ENCODE measurements at regions of chr1 and their contacts with region 1.

Region 1: DNA sequence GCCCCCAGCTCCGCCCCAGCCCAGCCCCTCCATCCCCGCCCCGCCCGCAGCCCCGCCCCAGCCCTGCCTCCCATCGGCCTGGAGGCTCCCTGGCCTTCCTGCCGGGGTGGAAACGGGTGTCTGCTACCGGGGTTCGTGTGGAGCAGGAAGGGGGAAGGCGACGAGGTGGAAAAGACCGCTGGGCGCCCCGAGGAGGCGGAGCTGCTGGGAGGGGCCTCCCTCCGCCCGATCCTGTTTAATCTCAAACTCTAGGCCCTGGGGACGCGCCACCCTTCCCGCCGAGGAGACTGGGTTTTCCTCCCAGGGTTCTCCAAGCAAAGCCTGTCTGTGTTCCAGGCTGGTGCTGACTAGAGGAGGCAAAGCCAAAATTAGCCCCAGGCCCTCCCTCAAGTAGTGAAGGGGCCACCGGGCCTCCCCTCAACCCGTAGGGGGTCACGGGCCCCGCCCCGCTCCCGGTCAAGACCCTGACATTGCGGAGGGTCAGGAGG is 16.2 kb upstream of the TTLL10 start:
- DNase-seq: peak; percentile 93
- H3K4me3 ChIP-seq: peak overlapping the region; percentile 41 to 62 (median 60)
- H3K27ac ChIP-seq: peak overlapping the region; percentile 96 to 98 (median 97)
- H3K4me1 ChIP-seq: peaks cover 9 to 44% (median 41%) of the 10 kb centered on the region in 4 donors
- H3K27me3 ChIP-seq: no peaks in the 10 kb centered on the region
- CTCF ChIP-seq: no peak
- EP300 ChIP-seq: no peak
- POLR2A ChIP-seq: peak; percentile 92

Region 2: DNA sequence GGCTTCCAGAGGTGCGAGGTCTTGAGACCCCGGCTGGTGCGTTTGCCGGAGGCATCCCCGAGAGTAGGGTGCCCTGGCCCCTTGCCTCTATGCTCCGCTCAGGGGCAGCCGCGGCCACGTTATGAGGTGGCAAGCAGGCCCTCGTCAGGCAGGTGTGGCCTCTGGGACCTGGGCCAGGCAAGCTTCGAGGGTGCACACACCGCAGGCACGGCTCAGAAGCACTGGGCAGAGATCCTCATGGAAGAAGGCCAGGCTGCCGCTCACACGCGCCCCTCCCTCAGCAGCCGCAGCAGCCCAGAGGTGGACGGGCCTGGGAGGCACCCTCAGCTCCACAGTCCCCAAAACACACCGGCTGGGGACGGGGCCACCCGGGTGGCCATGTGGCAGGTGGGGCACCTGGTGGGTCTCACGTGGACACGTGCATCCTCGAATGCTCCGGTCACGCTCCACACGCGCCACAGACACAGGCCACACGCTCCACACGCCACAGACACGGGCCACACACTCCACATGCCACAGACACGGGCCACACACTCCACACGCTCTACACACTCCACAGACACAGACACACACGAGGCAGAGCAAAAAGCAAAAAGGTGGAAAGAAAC is 67.9 kb after region 1 on chr1:
- in situ Hi-C with region 1: no loop called
- intact Hi-C with region 1: loop called (anchors 10 kb)
- DNase-seq: peak; percentile 52
- H3K4me3 ChIP-seq: no peak overlapping the region
- H3K27ac ChIP-seq: no peak overlapping the region
- H3K4me1 ChIP-seq: peaks cover 10 to 19% (median 14%) of the 10 kb centered on the region in 4 donors
- H3K27me3 ChIP-seq: no peaks in the 10 kb centered on the region
- CTCF ChIP-seq: no peak
- EP300 ChIP-seq: no peak
- POLR2A ChIP-seq: no peak

Measured in transverse colon (tissue), 4 donors.